GM13977 (cell line): ENCODE measurements at regions of chr6 and their contacts with region 1.

Region 1: DNA sequence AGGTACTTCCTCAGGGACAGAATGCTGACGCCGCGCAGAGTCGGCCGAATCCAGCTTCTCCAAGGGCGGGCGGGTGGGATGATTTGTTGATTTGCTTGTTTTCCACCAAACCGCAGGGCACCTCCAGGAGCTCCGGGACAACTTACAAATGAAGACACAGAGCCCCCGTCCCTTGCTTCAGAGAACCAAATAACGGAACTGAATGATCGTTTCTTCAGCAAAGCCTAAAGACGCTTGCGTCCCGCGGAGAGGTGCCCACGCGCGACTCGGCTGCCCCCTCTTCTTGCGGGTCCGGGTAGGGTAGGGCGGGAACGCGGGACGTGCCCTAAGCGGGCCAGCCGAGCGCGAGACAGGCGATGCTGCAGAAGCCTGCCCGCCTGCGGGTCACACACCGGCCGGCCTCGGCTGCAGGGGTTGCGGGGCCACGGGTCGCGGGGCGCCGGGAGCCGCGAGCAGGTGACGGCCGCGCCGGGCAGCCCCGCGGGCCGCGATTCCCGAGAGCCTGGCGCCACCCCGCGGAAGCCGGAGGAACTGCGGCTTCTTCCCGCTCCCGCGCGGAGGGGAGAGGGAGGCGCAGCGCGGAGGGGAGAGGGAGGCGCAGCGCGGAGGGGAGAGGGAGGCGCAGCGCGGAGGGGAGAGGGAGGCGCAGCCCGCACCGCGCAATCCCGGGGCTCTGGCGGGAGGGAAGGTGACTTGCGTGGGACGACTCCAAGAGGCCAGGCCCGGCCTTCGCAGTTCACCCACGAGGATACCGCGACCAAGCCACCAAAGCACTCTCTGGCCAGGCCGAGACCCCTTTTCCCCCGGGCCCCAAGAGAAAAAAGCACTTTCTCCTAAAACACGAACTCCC is 7.7 kb upstream of the FOXF2 start:
- DNase-seq: peak; percentile 83
- CTCF ChIP-seq: peak; percentile 94

Region 2: DNA sequence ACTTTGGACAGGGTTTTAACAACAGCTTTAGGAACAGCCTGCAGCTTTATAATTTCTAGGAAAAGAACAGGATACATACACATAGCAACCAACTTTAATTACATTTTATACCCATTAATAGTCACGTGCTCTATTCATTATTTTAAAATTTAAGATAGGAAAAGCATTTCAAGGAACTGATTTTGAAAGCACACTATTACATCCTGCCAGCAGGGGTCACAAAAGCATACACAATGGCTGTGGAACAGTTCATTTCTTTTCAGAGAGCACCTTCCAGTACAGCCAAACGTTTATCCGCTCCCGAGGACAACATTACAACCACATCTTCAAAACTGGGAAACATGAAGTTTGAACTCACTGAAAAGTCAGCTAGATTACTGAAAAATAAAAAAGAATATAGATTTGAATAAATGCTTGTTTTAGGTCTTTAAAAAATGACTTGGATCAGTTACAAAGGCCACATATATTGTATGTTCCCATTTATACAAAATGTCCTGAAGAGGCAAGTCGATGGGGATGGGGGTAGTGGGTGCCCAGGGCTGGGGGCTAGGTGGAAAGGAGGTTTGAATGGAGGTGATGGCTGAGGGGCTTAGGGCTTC is 584.1 kb before region 1 on chr6:
- in situ Hi-C with region 1: loop called (anchors 10 kb)
- DNase-seq: peak; percentile 53
- CTCF ChIP-seq: peak; percentile 73

Region 3: GRCh38 chr6:1309366-1309765 is 72.3 kb before region 1 on chr6:
- in situ Hi-C with region 1: loop called (anchors 10 kb)
- DNase-seq: no peak
- CTCF ChIP-seq: no peak